Adrenal gland (tissue), 19 donors: ENCODE measurements at regions of chr3 and their contacts with region 1.

Region 1: GRCh38 chr3:125967138-125967537 is 1.8 kb upstream of the ROPN1B start:
- DNase-seq: no peak
- H3K4me3 ChIP-seq: no peak overlapping the region
- H3K27ac ChIP-seq: no peak overlapping the region
- H3K4me1 ChIP-seq: peaks cover 2% of the 10 kb centered on the region in 2 donors
- H3K27me3 ChIP-seq: no peaks in the 10 kb centered on the region
- CTCF ChIP-seq: no peak
- POLR2A ChIP-seq: no peak

Region 2: GRCh38 chr3:125602752-125603649 is 364.1 kb before region 1 on chr3:
- intact Hi-C with region 1: no loop called
- DNase-seq: peak in 6 of 7 donors; percentile 41 to 79 (median 59)
- H3K4me3 ChIP-seq: peak overlapping the region in 1 of 4 donors; percentile 43
- H3K27ac ChIP-seq: peak overlapping the region in 4 of 5 donors; percentile 3 to 64 (median 34)
- H3K4me1 ChIP-seq: peaks cover 0 to 6% of the 10 kb centered on the region in 2 donors
- H3K27me3 ChIP-seq: no peaks in the 10 kb centered on the region
- CTCF ChIP-seq: peak in 4 of 6 experiments; percentile 26 to 36 (median 31)
- POLR2A ChIP-seq: peak in 1 of 2 donors; percentile 9

Region 3: DNA sequence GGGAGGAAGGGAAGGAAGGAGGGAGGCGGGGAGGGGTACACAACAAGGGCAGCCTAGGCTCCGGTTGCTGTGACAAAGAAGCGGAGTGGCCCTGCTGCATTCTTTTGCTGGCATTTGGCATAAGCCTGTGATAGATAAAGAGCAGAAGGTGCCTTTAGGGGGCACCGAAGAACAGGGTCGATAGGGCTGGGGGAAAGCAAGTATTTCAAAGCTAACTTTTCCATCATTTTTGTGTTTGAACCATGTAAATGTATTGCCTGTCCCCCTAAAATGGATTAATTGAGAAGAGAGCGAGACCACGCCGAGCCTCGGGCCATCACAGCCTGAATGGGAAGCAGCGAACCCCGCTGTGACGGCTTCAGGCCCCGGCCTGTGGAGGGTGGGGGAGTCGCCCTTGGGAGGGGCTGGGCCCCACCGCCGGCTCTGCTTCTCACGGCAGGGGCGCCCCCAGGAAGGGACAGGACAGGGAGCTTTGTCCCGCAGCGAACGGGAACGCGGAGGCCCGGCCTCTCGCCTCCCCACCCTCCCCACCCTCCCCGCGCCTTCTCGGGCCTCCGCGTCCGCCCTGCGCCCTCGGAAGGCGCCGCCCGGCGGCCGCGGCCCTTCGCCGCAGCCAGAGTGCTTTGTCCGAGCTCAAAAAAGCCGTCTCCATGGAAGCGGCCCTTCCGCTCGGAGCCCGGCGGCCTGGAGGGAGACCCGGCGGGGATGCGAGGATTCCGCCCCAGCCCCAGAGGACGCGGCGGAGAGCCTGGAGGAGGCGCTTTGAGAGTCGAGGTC is 245.7 kb after region 1 on chr3:
- intact Hi-C with region 1: loop called in 1 of 2 experiments (anchors 10 kb)
- DNase-seq: peak; percentile 41 to 58 (median 54)
- H3K4me3 ChIP-seq: peak overlapping the region in 2 of 4 donors; percentile 26 to 59
- H3K27ac ChIP-seq: peak overlapping the region in 3 of 5 donors; percentile 61 to 83 (median 74)
- H3K4me1 ChIP-seq: peaks cover 11 to 18% of the 10 kb centered on the region in 2 donors
- H3K27me3 ChIP-seq: no peaks in the 10 kb centered on the region
- CTCF ChIP-seq: peak; percentile 15 to 51 (median 32)
- POLR2A ChIP-seq: peak in 1 of 2 donors; percentile 24

Region 4: DNA sequence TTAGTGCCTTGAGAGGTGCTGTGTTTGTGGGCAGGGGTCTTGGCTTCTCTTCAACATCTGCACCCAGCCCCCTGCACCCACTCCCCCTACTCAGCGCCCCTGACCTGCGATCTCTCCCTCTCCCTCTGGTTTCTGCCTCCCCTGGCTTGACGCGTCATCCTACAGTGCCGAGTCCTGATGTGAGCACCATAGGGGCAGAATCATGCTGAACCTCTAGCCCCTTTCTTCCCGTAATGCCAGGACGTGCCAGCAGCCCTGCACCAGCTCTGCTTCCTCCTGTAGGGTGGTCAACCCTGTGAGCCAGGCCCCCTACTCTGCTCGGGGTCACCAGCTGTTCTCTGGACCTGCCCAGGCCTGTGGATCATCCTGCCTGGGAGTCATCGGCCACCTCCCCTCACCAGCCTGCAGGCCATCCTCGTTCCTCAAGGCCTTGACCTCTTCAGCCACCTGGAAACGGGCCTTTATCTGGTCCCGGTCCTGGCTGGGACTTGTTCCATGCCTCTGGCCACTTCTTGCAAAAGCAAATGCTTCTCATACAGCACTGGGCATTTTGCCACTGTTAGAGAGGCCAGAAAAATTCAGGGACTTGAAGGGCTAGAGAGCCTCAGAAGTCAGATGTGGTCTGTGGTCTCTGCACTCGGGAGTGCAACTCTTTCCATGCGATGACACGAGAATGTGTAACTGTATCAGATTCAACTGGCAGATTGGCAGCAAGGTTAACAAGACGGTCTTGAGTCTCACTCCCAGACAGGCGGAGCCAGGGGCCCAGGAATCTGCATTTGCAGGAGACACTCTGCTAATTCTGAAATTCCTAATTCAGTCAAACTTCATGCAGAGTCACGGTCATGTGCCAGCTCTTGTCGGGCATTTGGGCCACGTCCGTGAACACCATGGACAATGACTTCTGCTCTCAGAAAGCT is 406.8 kb after region 1 on chr3:
- intact Hi-C with region 1: no loop called
- DNase-seq: peak; percentile 57 to 92 (median 82)
- H3K4me3 ChIP-seq: no peak overlapping the region
- H3K27ac ChIP-seq: peak overlapping the region in 1 of 5 donors; percentile 52
- H3K4me1 ChIP-seq: peaks cover 0 to 10% of the 10 kb centered on the region in 2 donors
- H3K27me3 ChIP-seq: no peaks in the 10 kb centered on the region
- CTCF ChIP-seq: no peak
- POLR2A ChIP-seq: no peak

Region 5: DNA sequence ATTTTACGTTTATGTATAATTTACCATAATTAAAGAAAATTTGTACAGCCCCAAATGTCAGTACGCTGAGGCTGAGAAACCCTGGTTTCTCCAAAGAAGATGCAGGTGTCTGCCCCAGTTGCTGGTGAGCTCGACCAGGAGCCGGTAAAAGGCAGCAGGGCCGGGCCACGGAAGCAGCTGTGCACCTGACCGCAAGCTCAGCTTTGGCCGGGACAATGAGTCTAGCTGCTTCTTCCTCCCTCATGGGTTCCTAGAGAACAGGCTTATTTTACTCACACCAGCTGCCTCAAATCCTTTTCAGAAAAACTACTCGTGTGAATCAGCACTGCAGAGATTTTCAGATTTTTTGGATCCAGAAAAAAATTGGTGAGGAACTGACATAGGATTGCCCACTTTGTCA is 526.6 kb after region 1 on chr3:
- intact Hi-C with region 1: no loop called
- DNase-seq: no peak
- H3K4me3 ChIP-seq: no peak overlapping the region
- H3K27ac ChIP-seq: peak overlapping the region in 1 of 5 donors; percentile 64
- H3K4me1 ChIP-seq: peaks cover 0 to 10% of the 10 kb centered on the region in 2 donors
- H3K27me3 ChIP-seq: no peaks in the 10 kb centered on the region
- CTCF ChIP-seq: no peak
- POLR2A ChIP-seq: no peak